ENCODE measurements at regions of chr9 and their contacts with region 1.

Region 1: DNA sequence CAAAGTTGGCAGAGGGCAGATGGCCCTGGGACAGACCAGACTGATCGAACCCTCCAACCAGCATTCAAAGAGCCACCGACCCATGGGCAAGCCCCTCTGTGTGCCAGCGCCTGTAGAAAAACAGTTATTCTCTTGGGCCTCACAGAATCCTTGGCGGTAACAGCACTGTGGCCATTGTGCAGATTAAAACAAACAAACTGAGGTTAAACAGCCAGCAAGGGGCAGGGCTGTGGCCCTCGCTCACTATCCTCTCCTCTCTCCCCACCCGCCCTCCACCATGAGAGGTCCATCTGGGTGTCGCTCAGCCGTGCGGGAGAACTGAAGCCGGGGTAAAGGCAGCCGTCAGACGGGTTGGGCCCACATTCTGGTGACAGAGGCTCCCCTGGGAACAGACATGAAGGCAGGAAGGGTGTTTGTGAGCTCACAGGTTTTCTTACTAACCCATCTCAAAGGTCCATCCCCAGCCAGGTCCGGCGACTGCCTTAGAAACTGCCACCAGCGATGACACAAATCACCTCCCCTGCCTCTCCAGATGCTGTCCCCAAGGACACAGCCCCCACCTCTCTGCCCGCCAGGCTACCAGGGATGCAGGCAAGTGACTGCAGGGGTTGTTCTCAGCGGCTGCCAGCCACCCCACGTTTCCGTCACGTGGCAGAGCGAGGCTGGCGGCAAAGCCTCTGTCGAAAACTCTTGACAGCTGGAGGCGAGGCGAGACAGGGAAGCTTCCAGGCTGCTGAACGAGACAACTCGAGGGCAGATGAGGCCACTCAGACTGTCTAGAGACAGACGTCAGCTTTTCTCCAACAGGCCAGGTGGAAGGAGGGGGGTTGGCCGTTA is 75.8 kb upstream of the SARDH start:
- DNase-seq: no peak
- H3K4me3 ChIP-seq: no peak overlapping the region
- CTCF ChIP-seq: no peak

Region 2: GRCh38 chr9:133855802-133856521 is 42.0 kb after region 1 on chr9:
- in situ Hi-C with region 1: loop called (anchors 5 kb)
- DNase-seq: peak; percentile 8
- H3K4me3 ChIP-seq: no peak overlapping the region
- CTCF ChIP-seq: no peak

Measured in astrocyte of the cerebellum (primary cell).